Panc1 (cell line): ENCODE measurements at regions of chr12 and their contacts with region 1.

Region 1: GRCh38 chr12:47797441-47797840 is 22.3 kb downstream of the HDAC7 start:
- DNase-seq: no peak
- ATAC-seq: peak; percentile 77
- H3K4me3 ChIP-seq: no peak overlapping the region
- H3K27ac ChIP-seq: no peak overlapping the region
- H3K4me1 ChIP-seq: peaks cover 16% of the 10 kb centered on the region
- H3K27me3 ChIP-seq: no peaks in the 10 kb centered on the region
- CTCF ChIP-seq: no peak; the same call in 1 of the 2 replicates

Region 2: GRCh38 chr12:47730341-47730744 is 67.1 kb before region 1 on chr12:
- CTCF ChIA-PET with region 1: no interaction called
- POLR2A ChIA-PET with region 1: interaction called, 10 read pairs
- in situ Hi-C with region 1: no loop called
- intact Hi-C with region 1: no loop called
- DNase-seq: no peak
- ATAC-seq: no peak
- H3K4me3 ChIP-seq: no peak overlapping the region
- H3K27ac ChIP-seq: no peak overlapping the region
- H3K4me1 ChIP-seq: no peaks in the 10 kb centered on the region
- H3K27me3 ChIP-seq: no peaks in the 10 kb centered on the region
- CTCF ChIP-seq: no peak

Region 3: GRCh38 chr12:47846294-47846996 is 49.0 kb after region 1 on chr12:
- CTCF ChIA-PET with region 1: no interaction called
- POLR2A ChIA-PET with region 1: no interaction called
- in situ Hi-C with region 1: no loop called
- intact Hi-C with region 1: no loop called
- DNase-seq: no peak
- ATAC-seq: no peak
- H3K4me3 ChIP-seq: no peak overlapping the region
- H3K27ac ChIP-seq: no peak overlapping the region
- H3K4me1 ChIP-seq: no peaks in the 10 kb centered on the region
- H3K27me3 ChIP-seq: no peaks in the 10 kb centered on the region
- CTCF ChIP-seq: no peak